ENCODE measurements at regions of chr7 and their contacts with region 1.

Region 1: DNA sequence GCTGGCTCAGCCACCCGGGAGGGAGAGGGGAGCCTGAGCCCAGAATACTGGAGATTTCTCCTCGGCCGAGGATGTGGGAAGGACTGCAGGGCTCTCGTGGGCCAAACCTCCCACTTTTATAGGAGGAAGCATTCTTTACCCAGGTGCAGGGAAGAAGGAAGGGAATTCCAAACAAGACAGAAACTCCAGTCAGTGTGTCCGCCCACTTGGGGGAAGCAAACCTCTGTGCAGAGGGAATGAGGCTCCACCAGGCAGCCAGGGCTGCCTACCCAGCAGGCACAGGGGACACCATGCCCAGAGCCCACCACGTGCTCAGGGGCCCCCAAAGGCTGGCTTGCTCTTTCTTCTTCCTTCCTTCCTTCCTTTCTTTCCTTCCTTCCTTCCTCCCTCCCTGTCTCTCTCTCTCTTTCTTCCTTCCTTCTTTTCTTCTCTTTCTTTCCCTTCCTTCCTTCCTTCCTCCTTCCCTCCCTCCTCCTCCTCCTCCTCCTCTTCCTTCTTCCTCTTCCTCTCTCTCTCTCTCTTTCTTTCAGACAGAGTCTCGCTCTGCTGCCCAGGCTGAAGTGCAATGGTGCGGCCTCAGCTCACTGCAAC is 15.4 kb upstream of the FZD9 start:
- DNase-seq: no peak
- ATAC-seq: no peak
- H3K4me3 ChIP-seq: no peak overlapping the region
- H3K4me3 Mint-ChIP-seq: no peak overlapping the region
- H3K27ac ChIP-seq: no peak overlapping the region
- H3K27ac Mint-ChIP-seq: no peak overlapping the region
- H3K4me1 ChIP-seq: no peaks in the 10 kb centered on the region
- H3K4me1 Mint-ChIP-seq: no peaks in the 10 kb centered on the region
- H3K27me3 ChIP-seq: no peaks in the 10 kb centered on the region
- H3K27me3 Mint-ChIP-seq: no peaks in the 10 kb centered on the region
- CTCF ChIP-seq: no peak

Region 2: DNA sequence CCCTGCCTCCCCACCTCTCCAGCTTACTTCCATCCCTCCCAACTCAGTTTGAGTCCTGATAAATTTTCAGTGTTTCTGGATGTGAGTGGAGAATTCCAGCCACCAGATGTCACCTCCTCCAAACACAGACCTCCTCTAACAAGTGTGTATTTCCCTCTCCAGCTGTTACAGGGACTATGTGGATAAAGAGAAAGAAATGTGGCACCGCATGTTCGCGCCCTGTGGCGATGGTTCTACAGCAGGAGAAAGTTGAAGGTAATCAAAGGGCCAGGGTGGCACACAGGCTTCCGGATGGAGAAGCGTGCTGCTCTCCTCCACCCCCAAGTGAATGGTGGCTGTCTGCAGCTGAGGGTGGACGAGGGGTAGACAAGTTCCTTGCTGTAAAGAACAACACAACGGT is 75.6 kb before region 1 on chr7:
- CTCF ChIA-PET with region 1: no interaction called
- POLR2A ChIA-PET with region 1: no interaction called
- intact Hi-C with region 1: loop called in 1 of 2 experiments (anchors 5 kb)
- DNase-seq: no peak
- ATAC-seq: no peak
- H3K4me3 ChIP-seq: no peak overlapping the region
- H3K4me3 Mint-ChIP-seq: no peak overlapping the region
- H3K27ac ChIP-seq: no peak overlapping the region
- H3K27ac Mint-ChIP-seq: no peak overlapping the region
- H3K4me1 ChIP-seq: no peaks in the 10 kb centered on the region
- H3K4me1 Mint-ChIP-seq: no peaks in the 10 kb centered on the region
- H3K27me3 ChIP-seq: no peaks in the 10 kb centered on the region
- H3K27me3 Mint-ChIP-seq: peaks cover 3% of the 10 kb centered on the region
- CTCF ChIP-seq: no peak

Measured in CD4-positive, alpha-beta T cell (primary cell).